ENCODE measurements at regions of chr17 and their contacts with region 1.

Region 1: DNA sequence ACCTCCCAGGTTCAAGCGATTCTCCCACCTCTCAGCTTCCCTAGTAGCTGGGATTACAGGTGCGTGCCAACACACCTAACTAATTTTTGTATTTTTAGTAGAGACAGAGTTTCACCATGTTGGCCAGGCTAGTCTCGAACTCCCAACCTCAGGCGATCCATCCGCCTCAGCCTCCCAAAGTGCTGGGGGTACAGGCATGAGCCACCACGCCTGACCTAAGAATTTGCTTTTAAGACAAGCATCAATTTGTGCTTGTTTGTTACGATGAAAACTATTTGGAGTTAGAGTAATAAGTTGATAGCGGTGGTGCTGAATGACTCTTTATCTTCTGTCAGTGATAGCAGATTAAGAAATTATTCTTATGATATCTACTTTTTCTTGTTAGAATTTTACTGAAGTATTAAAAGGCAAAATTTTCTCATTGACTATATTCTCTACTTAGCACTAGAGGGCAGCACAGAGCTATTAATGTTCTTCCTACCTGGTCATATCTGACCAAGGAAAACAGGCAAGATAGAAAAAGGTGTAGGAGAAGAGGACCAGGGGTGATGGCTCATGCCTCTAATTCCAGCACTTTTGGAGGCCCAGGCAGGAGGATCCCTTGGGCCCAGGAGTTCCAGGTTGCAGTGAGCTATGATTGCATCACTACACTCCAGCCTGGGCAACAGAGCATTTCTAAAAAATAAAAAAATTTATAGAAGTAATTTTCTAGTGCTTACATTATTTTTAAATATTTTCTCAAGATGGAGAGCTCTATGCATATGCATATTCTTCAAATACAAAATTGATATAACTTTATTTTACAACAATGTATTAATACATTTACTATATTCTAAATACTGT is 24.5 kb downstream of the STXBP4 start:
- DNase-seq: no peak

Region 2: DNA sequence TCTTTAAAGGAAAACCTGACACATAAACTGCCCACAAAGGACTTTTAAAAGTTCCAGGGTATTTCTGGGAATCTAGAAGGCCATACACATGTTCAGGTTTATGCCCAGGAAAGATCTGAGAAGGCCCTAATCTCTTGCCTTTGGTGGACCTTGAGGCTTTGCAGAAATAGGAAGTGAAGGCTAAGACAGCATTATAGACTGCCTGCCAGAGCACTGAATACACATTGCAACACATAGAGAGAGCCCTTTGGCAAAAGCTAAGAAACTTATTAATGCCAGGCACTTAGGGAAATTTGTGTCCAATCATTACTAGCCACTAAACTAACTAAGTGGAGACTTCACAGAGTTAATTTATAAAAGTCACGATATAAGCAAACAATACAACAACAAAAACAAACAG is 358.2 kb after region 1 on chr17:
- intact Hi-C with region 1: loop called (anchors 5 to 10 kb)
- DNase-seq: no peak

Region 3: DNA sequence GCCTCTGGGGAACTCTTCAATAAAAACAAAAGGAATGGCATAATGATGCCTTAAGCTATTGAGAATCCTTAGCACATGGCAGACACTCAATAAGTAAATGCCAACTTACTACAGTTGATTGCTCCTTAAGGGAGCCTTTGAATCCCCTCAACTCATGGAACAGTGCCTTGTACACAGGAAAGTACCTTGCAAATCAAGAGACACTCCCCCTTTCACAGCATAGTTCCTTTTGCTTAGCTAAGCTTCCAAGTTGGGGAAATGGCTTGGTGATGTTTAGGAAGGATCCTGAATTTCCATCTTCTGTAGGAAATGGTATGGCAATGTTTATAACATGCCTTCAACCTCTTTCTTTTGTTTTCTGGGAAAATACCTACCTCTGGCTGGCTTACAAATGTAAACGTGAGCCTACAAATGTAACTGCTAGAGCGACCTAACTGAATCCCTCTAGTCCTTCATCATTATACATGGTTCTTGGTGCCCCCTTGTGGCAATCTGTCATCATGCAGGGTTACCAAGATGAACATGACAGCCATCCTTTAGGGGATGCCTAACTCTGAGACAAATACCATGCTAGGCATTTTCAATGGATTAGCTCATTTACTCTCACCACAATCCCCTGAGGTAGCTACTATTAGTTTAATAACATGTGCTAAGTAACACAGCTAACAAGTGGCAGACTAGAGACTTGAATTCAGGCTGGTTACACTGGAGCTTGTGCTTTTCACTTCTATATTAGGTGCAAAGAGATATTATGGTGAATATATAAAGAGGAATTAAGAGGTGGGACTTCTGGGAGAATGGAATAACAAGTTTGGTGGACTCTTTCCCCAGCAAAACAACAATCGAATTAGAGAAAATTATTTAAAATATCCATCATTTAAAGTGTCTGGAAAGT is 363.7 kb after region 1 on chr17:
- intact Hi-C with region 1: loop called (anchors 5 to 10 kb)
- DNase-seq: no peak